GM12878 (cell line): ENCODE measurements at regions of chr19 and their contacts with region 1.

Region 1: GRCh38 chr19:16143399-16144245 is at the start of gene HSH2D:
- DNase-seq: peak; percentile 90
- ATAC-seq: peak; percentile 70
- H3K4me3 ChIP-seq: peak within 1 kb of the TSS; percentile 92
- H3K27ac ChIP-seq: peak within 1 kb of the TSS; percentile 99
- H3K4me1 ChIP-seq: peaks cover 37% of the 10 kb centered on the region
- H3K27me3 ChIP-seq: no peaks in the 10 kb centered on the region
- CTCF ChIP-seq: no peak
- EP300 ChIP-seq: peak in 1 of 2 experiments; percentile 81; a peak in 1 of 4 replicates
- POLR2A ChIP-seq: peak; percentile 97
- RAD21 ChIP-seq: no peak
- polyA plus RNA-seq, gene HSH2D: 22.0 to 27.2 TPM

Region 2: GRCh38 chr19:16035601-16036297 is 107.9 kb before region 1 on chr19:
- CTCF ChIA-PET with region 1: no interaction called
- POLR2A ChIA-PET with region 1: no interaction called
- RAD21 ChIA-PET with region 1: no interaction called
- SMC1A ChIA-PET with region 1: no interaction called
- in situ Hi-C with region 1: no loop called
- intact Hi-C with region 1: no loop called
- DNase-seq: no peak
- ATAC-seq: no peak
- H3K4me3 ChIP-seq: no peak overlapping the region
- H3K27ac ChIP-seq: no peak overlapping the region
- H3K4me1 ChIP-seq: no peaks in the 10 kb centered on the region
- H3K27me3 ChIP-seq: no peaks in the 10 kb centered on the region
- CTCF ChIP-seq: no peak
- EP300 ChIP-seq: no peak
- POLR2A ChIP-seq: no peak
- RAD21 ChIP-seq: no peak

Region 3: DNA sequence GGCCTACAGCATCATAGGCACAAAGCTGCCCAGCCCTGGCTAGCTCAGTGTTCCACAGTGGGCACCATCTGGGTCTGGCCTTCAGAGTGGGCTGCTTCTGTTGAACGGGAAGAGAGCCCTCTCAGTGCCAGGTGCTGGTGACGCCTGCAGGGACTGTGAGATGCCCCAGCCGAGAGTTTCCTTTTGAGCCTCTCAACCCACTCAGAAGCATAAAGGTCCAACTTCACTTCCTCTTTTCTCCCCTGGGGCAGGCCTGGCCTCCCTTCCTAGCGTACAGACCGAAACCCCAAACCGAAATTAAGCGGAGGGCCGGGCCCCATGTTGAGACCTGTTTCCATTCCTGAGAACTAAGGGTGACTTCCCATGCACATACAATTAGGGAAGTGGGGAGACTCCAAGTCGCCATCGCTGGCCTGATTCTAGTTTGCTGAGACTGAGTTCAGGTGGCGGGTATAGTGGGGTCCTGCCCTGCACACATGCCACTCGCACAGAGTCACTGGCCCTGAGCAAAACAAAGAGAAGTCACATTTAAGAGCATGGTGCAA is 25.1 kb before region 1 on chr19:
- CTCF ChIA-PET with region 1: interaction called, 111 read pairs
- POLR2A ChIA-PET with region 1: interaction called, 174 read pairs
- RAD21 ChIA-PET with region 1: interaction called, 80 read pairs
- SMC1A ChIA-PET with region 1: interaction called, 135 read pairs
- in situ Hi-C with region 1: no loop called
- intact Hi-C with region 1: loop called (anchors 1 kb)
- DNase-seq: peak; percentile 97
- ATAC-seq: peak; percentile 82
- H3K4me3 ChIP-seq: peak overlapping the region; percentile 59; the same call in 1 of the 2 replicates
- H3K27ac ChIP-seq: peak overlapping the region; percentile 100
- H3K4me1 ChIP-seq: peaks cover 62% of the 10 kb centered on the region
- H3K27me3 ChIP-seq: no peaks in the 10 kb centered on the region
- CTCF ChIP-seq: no peak
- EP300 ChIP-seq: peak; percentile 95 to 99
- POLR2A ChIP-seq: peak; percentile 80
- RAD21 ChIP-seq: no peak

Region 4: DNA sequence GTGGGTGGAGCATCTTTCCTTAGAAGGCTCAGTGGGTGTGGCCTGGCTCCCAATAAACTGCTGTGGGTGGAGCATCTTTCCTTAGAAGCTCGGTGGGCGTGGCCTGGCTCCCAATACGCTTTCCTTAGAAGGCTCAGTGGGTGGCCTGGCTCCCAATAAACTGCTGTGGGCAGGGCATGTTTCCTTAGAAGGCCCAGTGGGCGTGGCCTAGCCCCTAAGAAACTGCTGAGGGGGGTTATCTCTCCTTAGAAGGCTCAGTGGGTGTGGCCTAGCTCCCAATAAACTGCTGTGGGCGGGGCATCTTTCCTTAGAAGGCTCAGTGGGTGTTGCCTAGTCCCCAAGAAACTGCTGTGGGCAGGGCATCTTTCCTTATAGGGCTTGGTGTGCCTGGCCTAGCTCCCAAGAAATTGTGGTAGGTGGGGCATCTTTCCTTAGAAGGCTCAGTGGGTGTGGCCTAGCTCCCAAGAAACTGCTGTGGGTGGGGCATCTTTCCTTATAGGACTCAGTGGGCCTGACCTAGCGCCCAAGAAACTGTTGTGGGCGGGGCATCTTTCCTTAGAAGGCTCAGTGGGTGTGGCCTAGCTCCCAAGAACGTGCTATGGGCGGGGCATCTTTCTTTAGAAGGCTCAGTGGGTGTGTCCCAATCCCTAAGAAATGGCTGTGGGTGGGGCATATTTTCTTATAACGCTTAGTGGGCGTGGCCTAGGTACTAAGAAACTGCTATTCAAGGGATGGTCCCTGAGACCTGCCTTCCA is 10.1 kb after region 1 on chr19:
- CTCF ChIA-PET with region 1: interaction called, 4 read pairs
- POLR2A ChIA-PET with region 1: interaction called, 35 read pairs
- RAD21 ChIA-PET with region 1: interaction called, 7 read pairs
- SMC1A ChIA-PET with region 1: interaction called, 33 read pairs
- in situ Hi-C with region 1: no loop called
- intact Hi-C with region 1: no loop called
- DNase-seq: no peak
- ATAC-seq: peak; percentile 10
- H3K4me3 ChIP-seq: no peak overlapping the region
- H3K27ac ChIP-seq: no peak overlapping the region
- H3K4me1 ChIP-seq: peaks cover 54% of the 10 kb centered on the region
- H3K27me3 ChIP-seq: no peaks in the 10 kb centered on the region
- CTCF ChIP-seq: no peak
- EP300 ChIP-seq: no peak
- POLR2A ChIP-seq: peak; percentile 29; the same call in 1 of the 2 replicates
- RAD21 ChIP-seq: no peak

Region 5: DNA sequence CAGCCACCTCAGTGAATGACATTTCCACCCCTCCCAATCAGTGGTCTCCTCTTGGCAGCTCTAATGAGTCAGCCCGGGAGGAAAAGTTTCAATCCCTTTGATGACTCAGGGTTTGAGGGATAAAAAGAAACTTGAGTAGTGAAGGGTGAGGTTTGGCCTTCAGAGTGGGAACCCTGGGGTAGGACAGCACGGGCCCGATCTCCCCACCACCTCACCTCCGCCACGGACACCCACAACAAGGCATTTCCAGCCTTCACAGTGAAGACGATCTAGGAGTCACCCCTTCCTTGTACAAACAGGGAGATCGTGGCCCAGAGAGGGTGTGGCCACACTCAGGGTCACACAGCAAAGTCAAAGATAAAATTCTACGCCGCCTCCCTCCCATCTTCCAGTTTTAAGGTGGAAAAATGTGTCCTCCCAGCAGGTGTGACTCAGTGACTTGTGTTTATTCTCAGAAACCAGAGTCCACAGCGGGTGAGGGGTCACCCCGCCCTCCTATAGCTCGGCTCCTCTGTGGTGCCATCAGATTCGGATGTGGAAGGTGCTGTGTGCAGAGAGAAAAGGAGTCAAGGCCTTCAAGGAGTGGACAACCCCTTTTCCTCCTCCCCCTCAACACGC is 17.4 kb after region 1 on chr19:
- CTCF ChIA-PET with region 1: no interaction called
- POLR2A ChIA-PET with region 1: interaction called, 35 read pairs
- RAD21 ChIA-PET with region 1: interaction called, 7 read pairs
- SMC1A ChIA-PET with region 1: interaction called, 33 read pairs
- in situ Hi-C with region 1: no loop called
- intact Hi-C with region 1: no loop called
- DNase-seq: no peak
- ATAC-seq: no peak
- H3K4me3 ChIP-seq: no peak overlapping the region
- H3K27ac ChIP-seq: no peak overlapping the region; the same call in 1 of the 2 replicates
- H3K4me1 ChIP-seq: peaks cover 10% of the 10 kb centered on the region
- H3K27me3 ChIP-seq: no peaks in the 10 kb centered on the region
- CTCF ChIP-seq: no peak
- EP300 ChIP-seq: no peak
- POLR2A ChIP-seq: no peak
- RAD21 ChIP-seq: no peak